Heart left ventricle (tissue), 16 donors: ENCODE measurements at regions of chr15 and their contacts with region 1.

Region 1: DNA sequence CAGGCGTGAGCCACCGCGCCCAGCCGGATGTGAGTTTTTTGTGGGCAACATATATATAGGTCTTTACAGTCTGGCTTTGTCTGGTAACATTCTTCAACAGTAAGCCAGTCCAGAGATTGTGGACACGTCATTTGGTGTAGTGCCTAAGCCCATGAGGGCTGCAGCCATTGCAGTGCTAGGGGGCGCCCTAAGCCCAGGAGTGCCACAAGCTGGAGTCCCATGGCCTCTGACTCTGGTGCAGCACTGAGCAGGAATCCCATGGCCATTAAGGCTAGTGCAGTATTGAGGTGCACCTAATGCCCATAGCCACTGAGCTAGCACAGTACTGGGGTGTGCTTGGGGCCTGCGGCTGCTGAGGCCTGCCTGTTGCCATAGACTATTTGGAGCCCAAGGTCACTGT is 136.4 kb upstream of the NDN start:
- DNase-seq: no peak
- ATAC-seq: no peak
- H3K4me3 ChIP-seq: no peak overlapping the region
- H3K27ac ChIP-seq: no peak overlapping the region
- H3K4me1 ChIP-seq: no peaks in the 10 kb centered on the region
- H3K27me3 ChIP-seq: no peaks in the 10 kb centered on the region
- CTCF ChIP-seq: no peak
- POLR2A ChIP-seq: no peak

Region 2: DNA sequence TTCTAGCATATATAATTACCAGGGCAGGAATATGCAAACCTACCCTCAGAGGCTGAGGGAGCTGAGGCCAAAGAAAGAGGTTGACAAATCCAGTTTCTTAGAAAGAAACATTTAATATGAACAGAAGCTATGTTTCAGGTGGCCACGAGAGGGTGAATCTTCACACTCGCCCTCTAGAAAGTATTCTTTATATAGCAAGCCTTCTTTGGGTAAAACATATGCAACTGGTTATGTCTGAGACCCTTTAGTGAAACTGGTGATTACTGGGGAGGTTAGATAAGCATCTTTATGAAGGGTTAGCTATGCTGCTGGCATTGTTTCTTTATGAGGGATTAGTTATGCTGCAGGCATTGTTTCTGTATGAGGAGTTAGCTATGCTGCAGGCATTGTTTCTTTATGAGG is 325.8 kb before region 1 on chr15:
- intact Hi-C with region 1: no loop called
- DNase-seq: no peak
- ATAC-seq: no peak
- H3K4me3 ChIP-seq: no peak overlapping the region
- H3K27ac ChIP-seq: no peak overlapping the region
- H3K4me1 ChIP-seq: no peaks in the 10 kb centered on the region
- H3K27me3 ChIP-seq: no peaks in the 10 kb centered on the region
- CTCF ChIP-seq: peak in 8 of 12 donors; percentile 10 to 43 (median 26)
- POLR2A ChIP-seq: no peak

Region 3: GRCh38 chr15:23760024-23760423 is 63.5 kb before region 1 on chr15:
- intact Hi-C with region 1: loop called in 2 of 10 experiments (anchors 10 kb)
- DNase-seq: no peak
- ATAC-seq: no peak
- H3K4me3 ChIP-seq: no peak overlapping the region
- H3K27ac ChIP-seq: no peak overlapping the region
- H3K4me1 ChIP-seq: no peaks in the 10 kb centered on the region
- H3K27me3 ChIP-seq: no peaks in the 10 kb centered on the region
- CTCF ChIP-seq: no peak
- POLR2A ChIP-seq: no peak

Region 4: GRCh38 chr15:23839893-23840474 is 16.5 kb after region 1 on chr15:
- intact Hi-C with region 1: loop called in 1 of 10 experiments (anchors 2 kb)
- DNase-seq: no peak
- ATAC-seq: no peak
- H3K4me3 ChIP-seq: no peak overlapping the region
- H3K27ac ChIP-seq: no peak overlapping the region
- H3K4me1 ChIP-seq: no peaks in the 10 kb centered on the region
- H3K27me3 ChIP-seq: no peaks in the 10 kb centered on the region
- CTCF ChIP-seq: no peak
- POLR2A ChIP-seq: no peak

Region 5: DNA sequence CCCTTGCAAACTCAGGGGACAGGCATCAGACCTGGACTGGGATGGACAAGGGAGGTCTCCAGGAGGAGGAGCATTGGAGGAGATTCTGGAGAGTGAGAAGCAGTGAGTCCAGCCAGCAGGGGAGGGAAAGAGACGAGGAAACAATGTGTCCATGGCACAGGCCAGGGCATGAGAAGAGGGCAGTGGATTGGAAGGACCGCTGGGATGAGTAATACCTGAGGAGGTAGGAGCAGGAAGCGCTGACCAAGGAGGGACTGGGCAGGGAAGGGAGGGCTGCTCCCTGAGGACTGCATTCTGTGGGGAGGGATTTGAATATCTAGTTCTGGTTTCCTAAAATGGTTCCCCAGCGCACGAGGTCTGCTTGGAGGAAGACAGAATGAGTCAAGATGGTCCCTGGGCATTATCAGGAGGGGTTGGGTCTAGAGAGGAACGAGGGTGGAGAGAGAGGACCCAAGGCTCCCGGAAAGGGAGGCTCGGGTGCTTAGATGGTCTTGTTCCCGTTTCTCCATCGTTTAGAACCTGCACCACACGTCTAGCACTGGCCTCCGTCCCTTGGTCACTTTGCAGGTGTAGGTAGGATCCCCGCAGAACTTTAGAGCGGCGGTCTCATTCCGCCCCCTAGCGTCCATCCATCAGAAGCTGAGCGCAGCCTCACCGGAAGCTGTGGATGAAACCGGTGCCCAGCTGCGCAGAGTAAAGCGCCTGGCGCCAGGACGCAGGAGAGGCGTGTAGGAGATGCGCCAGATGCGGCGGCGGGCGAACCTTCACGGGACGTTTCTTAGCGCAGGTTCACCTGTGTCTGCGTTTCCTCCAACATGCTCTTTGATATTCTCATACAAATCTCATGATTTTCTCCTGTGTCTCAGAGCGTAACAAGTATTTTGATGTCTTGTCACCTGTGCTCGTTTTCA is 54.2 kb after region 1 on chr15:
- intact Hi-C with region 1: loop called in 1 of 10 experiments (anchors 10 kb)
- DNase-seq: peak in 3 of 5 donors; percentile 23 to 42 (median 34)
- ATAC-seq: peak; percentile 32 to 82 (median 64)
- H3K4me3 ChIP-seq: no peak overlapping the region
- H3K27ac ChIP-seq: no peak overlapping the region
- H3K4me1 ChIP-seq: no peaks in the 10 kb centered on the region
- H3K27me3 ChIP-seq: peaks cover 0 to 7% (median 0%) of the 10 kb centered on the region in 9 donors
- CTCF ChIP-seq: peak; percentile 38 to 62 (median 48)
- POLR2A ChIP-seq: no peak

Region 6: GRCh38 chr15:23897531-23897930 is 74.0 kb after region 1 on chr15:
- intact Hi-C with region 1: no loop called
- DNase-seq: peak in 2 of 5 donors; percentile 26 to 62
- ATAC-seq: peak in 3 of 4 donors; percentile 46 to 57 (median 49)
- H3K4me3 ChIP-seq: peak overlapping the region in 5 of 12 donors; percentile 12 to 40 (median 13)
- H3K27ac ChIP-seq: no peak overlapping the region
- H3K4me1 ChIP-seq: no peaks in the 10 kb centered on the region
- H3K27me3 ChIP-seq: peaks cover 0 to 4% (median 0%) of the 10 kb centered on the region in 9 donors
- CTCF ChIP-seq: no peak
- POLR2A ChIP-seq: no peak